ENCODE measurements at regions of chrX and their contacts with region 1.

Region 1: DNA sequence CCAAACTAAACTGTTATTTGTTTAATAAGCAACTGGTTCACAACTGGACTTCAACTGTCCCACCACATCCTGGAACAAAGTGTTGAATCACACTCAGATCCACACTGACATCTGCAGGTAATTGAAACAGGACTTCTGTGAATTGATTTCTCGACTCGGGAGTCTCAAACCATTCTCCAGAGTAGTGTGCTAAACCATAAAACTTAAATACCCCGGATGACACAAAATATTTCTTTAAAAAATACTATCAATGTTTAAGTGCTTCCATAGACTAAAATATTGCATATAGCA is 95.4 kb upstream of the PLAC1 start:
- DNase-seq: no peak
- H3K4me3 ChIP-seq: no peak overlapping the region
- H3K27me3 ChIP-seq: no peaks in the 10 kb centered on the region
- CTCF ChIP-seq: peak; percentile 20; the same call in 1 of the 2 replicates

Region 2: GRCh38 chrX:134520860-134521390 is 232.7 kb before region 1 on chrX:
- CTCF ChIA-PET with region 1: interaction called, 27 read pairs
- POLR2A ChIA-PET with region 1: no interaction called
- DNase-seq: no peak
- H3K4me3 ChIP-seq: no peak overlapping the region
- H3K27me3 ChIP-seq: no peaks in the 10 kb centered on the region
- CTCF ChIP-seq: peak; percentile 64

Region 3: DNA sequence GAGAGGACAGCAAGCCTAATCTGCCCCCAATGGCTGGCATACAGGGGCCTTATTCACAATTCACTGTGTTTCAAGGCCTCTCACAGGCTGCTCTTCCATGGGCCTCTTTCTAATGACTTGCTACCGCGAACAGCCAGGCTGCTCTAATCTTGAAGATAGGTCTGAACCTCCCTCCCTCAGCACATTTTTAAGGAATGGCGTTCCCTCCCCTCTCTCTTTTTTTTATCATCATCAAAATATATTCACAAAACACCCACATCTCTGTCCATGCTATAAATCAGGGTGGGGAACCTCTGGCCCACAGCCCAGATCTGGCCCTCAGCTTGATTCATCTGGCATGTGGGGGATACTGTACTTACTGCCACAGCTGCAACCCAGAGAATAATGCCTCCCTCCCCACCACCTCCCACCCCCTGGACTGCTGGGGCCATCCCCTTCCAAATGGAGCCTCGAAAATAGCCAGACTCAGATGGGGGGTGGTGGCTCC is 19.2 kb before region 1 on chrX:
- CTCF ChIA-PET with region 1: no interaction called
- POLR2A ChIA-PET with region 1: no interaction called
- DNase-seq: peak; percentile 50
- H3K4me3 ChIP-seq: no peak overlapping the region
- H3K27me3 ChIP-seq: no peaks in the 10 kb centered on the region
- CTCF ChIP-seq: no peak

Measured in BJ (cell line).